Esophagus muscularis mucosa (tissue), 4 donors: ENCODE measurements at regions of chr9 and their contacts with region 1.

Region 1: DNA sequence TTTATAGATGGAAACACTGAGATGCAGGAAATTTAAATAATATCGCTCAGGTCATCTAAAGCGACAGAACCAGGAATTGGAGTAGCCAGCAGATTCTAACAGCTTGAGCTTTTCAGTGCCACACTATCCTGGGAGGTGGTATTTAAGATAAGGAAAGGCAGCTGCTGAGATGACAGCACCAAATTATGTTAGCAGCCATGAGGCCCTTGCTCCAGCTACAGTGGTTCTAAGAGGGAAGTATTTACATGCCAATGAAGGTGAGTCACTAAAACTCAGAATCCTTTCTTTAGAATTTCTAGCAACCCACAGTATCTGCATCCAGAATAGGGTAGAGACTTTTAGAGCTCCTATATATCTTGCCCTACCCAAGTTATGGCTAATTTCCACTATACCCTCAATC is 127.0 kb upstream of the VLDLR start:
- DNase-seq: no peak
- H3K4me3 ChIP-seq: no peak overlapping the region
- H3K27ac ChIP-seq: peak overlapping the region in 3 of 4 donors; percentile 49 to 60 (median 60)
- H3K4me1 ChIP-seq: peaks cover 34 to 63% (median 57%) of the 10 kb centered on the region in 4 donors
- H3K27me3 ChIP-seq: no peaks in the 10 kb centered on the region
- CTCF ChIP-seq: no peak
- EP300 ChIP-seq: no peak
- POLR2A ChIP-seq: no peak

Region 2: DNA sequence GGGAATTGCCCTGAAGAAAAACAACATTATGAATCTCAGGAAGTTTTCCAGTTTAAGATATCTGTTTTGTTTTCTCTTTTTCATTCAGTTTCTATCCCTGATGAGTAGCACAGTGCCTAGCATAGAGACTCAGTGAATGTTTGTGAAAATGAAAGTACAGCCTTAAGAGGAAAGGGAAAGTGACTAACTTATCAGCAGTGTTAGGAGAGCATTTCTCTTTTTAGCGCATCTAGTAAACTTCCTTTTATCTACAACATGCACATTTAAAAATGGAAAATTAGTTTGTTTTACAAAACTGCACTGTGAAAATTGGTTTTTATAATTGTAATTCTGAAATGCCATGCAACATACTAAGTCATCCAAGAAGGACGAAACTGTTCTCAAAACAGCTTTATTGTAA is 368.7 kb before region 1 on chr9:
- intact Hi-C with region 1: loop called (anchors 10 kb)
- DNase-seq: no peak
- H3K4me3 ChIP-seq: peak overlapping the region in 3 of 4 donors; percentile 20 to 34 (median 25)
- H3K27ac ChIP-seq: peak overlapping the region; percentile 80 to 83 (median 82)
- H3K4me1 ChIP-seq: peaks cover 55 to 82% (median 74%) of the 10 kb centered on the region in 4 donors
- H3K27me3 ChIP-seq: no peaks in the 10 kb centered on the region
- CTCF ChIP-seq: no peak
- EP300 ChIP-seq: no peak
- POLR2A ChIP-seq: no peak

Region 3: GRCh38 chr9:2559212-2560152 is 64.9 kb after region 1 on chr9:
- intact Hi-C with region 1: loop called (anchors 5 kb)
- DNase-seq: no peak
- H3K4me3 ChIP-seq: no peak overlapping the region
- H3K27ac ChIP-seq: peak overlapping the region; percentile 69 to 74 (median 73)
- H3K4me1 ChIP-seq: peaks cover 18 to 26% (median 23%) of the 10 kb centered on the region in 4 donors
- H3K27me3 ChIP-seq: no peaks in the 10 kb centered on the region
- CTCF ChIP-seq: no peak
- EP300 ChIP-seq: no peak
- POLR2A ChIP-seq: no peak

Region 4: GRCh38 chr9:2620919-2621679 is 126.5 kb after region 1 on chr9:
- intact Hi-C with region 1: loop called (anchors 2 kb)
- DNase-seq: peak; percentile 93
- H3K4me3 ChIP-seq: peak overlapping the region; percentile 79 to 93 (median 86)
- H3K27ac ChIP-seq: peak overlapping the region; percentile 86 to 92 (median 89)
- H3K4me1 ChIP-seq: peaks cover 12 to 49% (median 34%) of the 10 kb centered on the region in 4 donors
- H3K27me3 ChIP-seq: peaks cover 0 to 20% (median 2%) of the 10 kb centered on the region in 4 donors
- CTCF ChIP-seq: peak in 2 of 3 experiments; percentile 25 to 36
- EP300 ChIP-seq: no peak
- POLR2A ChIP-seq: peak; percentile 21

Region 5: GRCh38 chr9:2809691-2810433 is 315.3 kb after region 1 on chr9:
- intact Hi-C with region 1: loop called (anchors 10 kb)
- DNase-seq: no peak
- H3K4me3 ChIP-seq: peak overlapping the region in 1 of 4 donors; percentile 10
- H3K27ac ChIP-seq: peak overlapping the region; percentile 58 to 75 (median 66)
- H3K4me1 ChIP-seq: peaks cover 25 to 36% (median 34%) of the 10 kb centered on the region in 4 donors
- H3K27me3 ChIP-seq: no peaks in the 10 kb centered on the region
- CTCF ChIP-seq: no peak
- EP300 ChIP-seq: no peak
- POLR2A ChIP-seq: no peak